CD8-positive, alpha-beta T cell (primary cell): ENCODE measurements at regions of chr13 and their contacts with region 1.

Region 1: DNA sequence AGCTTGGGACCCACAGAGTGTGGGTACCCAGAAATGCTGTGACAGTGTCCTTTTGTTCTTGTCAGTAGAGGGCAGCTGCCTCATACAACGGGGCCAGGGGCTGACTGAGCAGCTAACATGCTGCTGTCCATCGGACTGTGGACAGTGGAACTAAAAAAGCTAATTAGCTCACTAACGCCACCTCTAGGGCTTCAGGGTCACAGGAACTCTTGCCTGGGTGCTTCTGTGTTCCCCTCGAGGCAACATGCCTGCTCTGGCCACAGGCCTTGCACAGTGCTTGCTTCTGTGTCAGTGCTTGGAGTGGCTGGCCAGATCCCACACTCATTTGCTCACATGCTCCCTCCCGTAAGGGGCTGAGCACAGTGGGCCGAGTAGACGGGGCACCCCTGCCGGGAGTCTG is 377.0 kb downstream of the OLFM4 start:
- DNase-seq: no peak
- ATAC-seq: no peak
- H3K4me3 ChIP-seq: no peak overlapping the region
- H3K4me3 Mint-ChIP-seq: no peak overlapping the region
- H3K27ac ChIP-seq: no peak overlapping the region
- H3K27ac Mint-ChIP-seq: no peak overlapping the region
- H3K4me1 ChIP-seq: no peaks in the 10 kb centered on the region
- H3K4me1 Mint-ChIP-seq: no peaks in the 10 kb centered on the region
- H3K27me3 ChIP-seq: no peaks in the 10 kb centered on the region
- H3K27me3 Mint-ChIP-seq: no peaks in the 10 kb centered on the region
- CTCF ChIP-seq: no peak

Region 2: DNA sequence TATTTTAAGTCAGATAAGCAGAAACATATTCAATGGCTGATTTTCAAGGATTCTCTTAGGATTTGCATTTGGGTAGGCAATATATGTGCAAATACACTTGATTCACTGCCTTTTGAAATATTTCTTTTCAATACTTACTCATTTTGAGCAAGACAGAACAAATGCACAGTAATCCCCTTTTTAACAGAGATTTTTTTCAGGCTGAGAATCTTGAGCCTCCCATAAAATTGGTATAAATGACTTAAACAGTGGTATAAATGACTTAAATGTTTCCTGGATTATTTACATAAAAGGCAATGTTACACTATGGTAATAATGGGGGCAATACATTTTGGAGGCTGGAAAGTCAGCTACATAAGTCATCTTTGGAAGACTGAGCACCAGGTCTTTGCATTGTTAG is 12.0 kb after region 1 on chr13:
- CTCF ChIA-PET with region 1: no interaction called
- POLR2A ChIA-PET with region 1: no interaction called
- intact Hi-C with region 1: loop called in 1 of 2 experiments (anchors 1 kb)
- DNase-seq: no peak
- ATAC-seq: no peak
- H3K4me3 ChIP-seq: no peak overlapping the region
- H3K4me3 Mint-ChIP-seq: no peak overlapping the region
- H3K27ac ChIP-seq: no peak overlapping the region
- H3K27ac Mint-ChIP-seq: no peak overlapping the region
- H3K4me1 ChIP-seq: no peaks in the 10 kb centered on the region
- H3K4me1 Mint-ChIP-seq: no peaks in the 10 kb centered on the region
- H3K27me3 ChIP-seq: no peaks in the 10 kb centered on the region
- H3K27me3 Mint-ChIP-seq: no peaks in the 10 kb centered on the region
- CTCF ChIP-seq: no peak

Region 3: GRCh38 chr13:53848366-53848961 is 442.8 kb after region 1 on chr13:
- CTCF ChIA-PET with region 1: no interaction called
- POLR2A ChIA-PET with region 1: no interaction called
- intact Hi-C with region 1: no loop called
- DNase-seq: no peak
- ATAC-seq: no peak
- H3K4me3 ChIP-seq: no peak overlapping the region
- H3K4me3 Mint-ChIP-seq: no peak overlapping the region
- H3K27ac ChIP-seq: no peak overlapping the region
- H3K27ac Mint-ChIP-seq: no peak overlapping the region
- H3K4me1 ChIP-seq: no peaks in the 10 kb centered on the region
- H3K4me1 Mint-ChIP-seq: no peaks in the 10 kb centered on the region
- H3K27me3 ChIP-seq: no peaks in the 10 kb centered on the region
- H3K27me3 Mint-ChIP-seq: no peaks in the 10 kb centered on the region
- CTCF ChIP-seq: no peak